CD4-positive, alpha-beta memory T cell (primary cell): ENCODE measurements at regions of chr12 and their contacts with region 1.

Region 1: GRCh38 chr12:123614531-123614930 is 12.6 kb downstream of the DDX55 start:
- DNase-seq: no peak
- H3K4me3 ChIP-seq: no peak overlapping the region
- H3K4me3 Mint-ChIP-seq: no peak overlapping the region
- H3K27ac ChIP-seq: no peak overlapping the region
- H3K27ac Mint-ChIP-seq: peak overlapping the region in 1 of 7 donors; percentile 22
- H3K4me1 ChIP-seq: no peaks in the 10 kb centered on the region
- H3K4me1 Mint-ChIP-seq: peaks cover 0 to 4% (median 2%) of the 10 kb centered on the region in 4 donors
- H3K27me3 ChIP-seq: no peaks in the 10 kb centered on the region
- H3K27me3 Mint-ChIP-seq: no peaks in the 10 kb centered on the region

Region 2: DNA sequence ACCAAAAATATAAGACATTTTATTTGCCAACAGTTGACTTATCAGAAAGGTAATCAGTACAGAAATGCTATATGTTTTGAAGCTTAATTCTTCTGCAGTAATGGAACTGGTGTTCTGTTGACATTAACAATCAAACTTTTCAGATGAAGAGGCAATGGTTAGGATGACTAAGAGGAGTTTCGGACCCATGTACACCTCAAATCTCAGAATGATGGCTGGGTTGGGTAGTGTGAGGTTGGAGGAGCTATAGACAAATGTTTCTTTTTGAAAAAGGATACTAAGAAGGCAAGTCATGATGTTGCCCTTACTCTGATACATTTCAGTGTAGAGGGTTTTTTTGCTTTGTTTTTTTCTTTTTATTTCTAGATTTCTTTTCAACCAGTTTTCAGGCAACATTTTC is 1020.6 kb before region 1 on chr12:
- CTCF ChIA-PET with region 1: no interaction called
- POLR2A ChIA-PET with region 1: no interaction called
- intact Hi-C with region 1: no loop called
- DNase-seq: no peak
- H3K4me3 ChIP-seq: no peak overlapping the region
- H3K4me3 Mint-ChIP-seq: no peak overlapping the region
- H3K27ac ChIP-seq: no peak overlapping the region
- H3K27ac Mint-ChIP-seq: no peak overlapping the region
- H3K4me1 ChIP-seq: no peaks in the 10 kb centered on the region
- H3K4me1 Mint-ChIP-seq: peaks cover 0 to 2% (median 1%) of the 10 kb centered on the region in 4 donors
- H3K27me3 ChIP-seq: no peaks in the 10 kb centered on the region
- H3K27me3 Mint-ChIP-seq: no peaks in the 10 kb centered on the region

Region 3: DNA sequence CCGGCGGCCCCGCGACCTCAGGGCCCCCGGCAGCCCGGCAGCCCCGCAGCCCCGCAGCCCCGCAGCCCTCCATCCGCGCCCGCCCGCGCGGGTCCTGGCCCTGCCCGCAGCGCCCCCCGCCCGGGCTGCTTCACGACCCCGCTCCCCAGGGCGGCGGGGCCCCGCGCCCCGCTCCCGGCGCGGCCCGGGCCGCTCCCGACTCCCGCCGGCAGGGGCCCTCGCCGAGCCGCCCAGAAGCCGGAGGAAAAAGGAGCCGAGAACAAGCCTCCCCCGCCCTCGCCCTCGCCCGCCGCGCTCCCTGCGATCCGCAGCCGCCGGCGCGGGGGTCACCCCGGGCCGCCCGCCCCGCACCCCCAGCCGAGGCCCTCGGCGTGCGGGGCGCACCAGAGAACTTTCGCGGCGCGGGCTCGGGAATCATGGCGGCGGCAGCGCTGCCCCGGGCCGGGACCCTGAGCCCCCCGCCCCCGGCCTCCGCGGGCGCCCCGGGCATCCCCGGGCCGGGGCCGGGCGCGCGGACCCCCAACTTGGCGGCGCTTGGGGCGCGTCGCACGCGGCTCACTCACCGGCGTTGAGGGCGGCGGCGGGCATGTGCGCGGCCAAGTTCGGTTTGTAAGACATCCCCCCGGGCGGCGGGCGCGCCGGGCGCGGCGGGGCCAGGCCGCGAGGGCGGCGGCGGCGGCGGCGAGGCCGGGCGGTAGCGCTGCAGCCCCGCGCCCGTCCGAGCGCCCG is 343.4 kb before region 1 on chr12:
- CTCF ChIA-PET with region 1: no interaction called
- POLR2A ChIA-PET with region 1: no interaction called
- intact Hi-C with region 1: loop called (anchors 1 kb)
- DNase-seq: peak; percentile 70 to 74 (median 71)
- H3K4me3 ChIP-seq: peak overlapping the region in 1 of 2 donors; percentile 27
- H3K4me3 Mint-ChIP-seq: no peak overlapping the region
- H3K27ac ChIP-seq: no peak overlapping the region
- H3K27ac Mint-ChIP-seq: no peak overlapping the region
- H3K4me1 ChIP-seq: peaks cover 15% of the 10 kb centered on the region
- H3K4me1 Mint-ChIP-seq: peaks cover 10 to 32% (median 15%) of the 10 kb centered on the region in 4 donors
- H3K27me3 ChIP-seq: no peaks in the 10 kb centered on the region
- H3K27me3 Mint-ChIP-seq: no peaks in the 10 kb centered on the region